Heart left ventricle (tissue), 16 donors: ENCODE measurements at regions of chr2 and their contacts with region 1.

Region 1: DNA sequence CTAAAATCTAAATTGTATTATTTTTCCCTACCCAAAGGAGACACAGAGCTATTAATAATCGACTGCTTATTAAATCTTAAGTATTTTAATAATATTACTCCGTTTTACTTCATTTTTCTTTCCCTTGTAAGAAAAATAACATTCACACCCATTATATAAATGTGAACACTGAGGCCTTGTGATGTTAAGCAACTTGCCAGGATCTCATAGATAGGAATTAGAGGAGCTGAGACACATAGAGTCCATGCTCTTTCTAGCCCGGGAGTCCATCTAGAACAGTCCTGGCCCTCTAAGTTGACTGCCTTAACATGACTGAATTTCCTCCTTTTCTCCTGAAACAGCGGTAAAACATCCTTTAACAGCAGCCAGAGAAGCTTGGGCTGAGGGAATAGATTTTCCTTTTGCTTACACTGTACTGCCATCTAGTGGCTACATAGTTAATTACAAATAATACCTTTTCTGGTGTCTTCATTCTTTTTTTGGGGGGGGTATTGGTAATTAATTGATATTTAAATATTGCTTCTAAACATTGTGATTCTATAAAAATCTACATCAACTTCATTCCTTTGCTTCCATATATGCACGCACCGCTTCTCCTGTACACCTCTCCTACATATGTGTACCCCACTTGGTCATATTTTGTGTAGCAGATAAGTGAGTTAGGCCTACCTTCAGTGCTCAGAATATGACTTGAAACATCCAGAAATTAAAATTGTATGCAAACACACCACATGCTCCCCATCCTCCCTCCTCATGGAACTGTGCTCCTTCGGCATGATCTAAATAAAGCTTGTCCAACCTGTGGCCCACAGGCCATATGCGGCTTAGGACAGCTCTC is 125.8 kb upstream of the HNMT start:
- DNase-seq: no peak
- ATAC-seq: no peak
- H3K4me3 ChIP-seq: no peak overlapping the region
- H3K27ac ChIP-seq: no peak overlapping the region
- H3K4me1 ChIP-seq: no peaks in the 10 kb centered on the region
- H3K27me3 ChIP-seq: peaks cover 0 to 3% (median 0%) of the 10 kb centered on the region in 9 donors
- CTCF ChIP-seq: peak; percentile 54 to 80 (median 68)
- POLR2A ChIP-seq: no peak

Region 2: DNA sequence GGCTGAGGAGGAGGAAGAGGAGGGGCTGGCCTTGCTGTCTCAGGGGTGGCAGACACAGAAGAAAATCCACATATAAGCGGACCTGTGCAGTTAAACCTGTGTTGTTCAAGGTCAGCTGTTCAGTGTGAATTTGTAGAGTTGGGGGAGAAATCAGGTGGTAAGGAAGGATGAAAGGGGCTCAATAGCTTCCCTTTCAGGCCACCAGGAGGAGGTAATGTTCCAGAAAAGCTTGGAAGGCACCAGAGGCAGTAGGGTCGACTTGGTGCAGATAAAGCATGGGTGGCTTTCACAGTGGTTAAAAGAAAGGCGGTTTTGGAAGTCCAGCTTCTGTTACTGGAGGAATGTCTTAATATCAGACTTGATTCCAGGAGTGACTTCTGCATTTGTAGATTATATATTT is 905.8 kb before region 1 on chr2:
- intact Hi-C with region 1: loop called in 4 of 10 experiments (anchors 5 kb)
- DNase-seq: no peak
- ATAC-seq: no peak
- H3K4me3 ChIP-seq: no peak overlapping the region
- H3K27ac ChIP-seq: no peak overlapping the region
- H3K4me1 ChIP-seq: no peaks in the 10 kb centered on the region
- H3K27me3 ChIP-seq: no peaks in the 10 kb centered on the region
- CTCF ChIP-seq: peak in 8 of 12 donors; percentile 15 to 31 (median 26)
- POLR2A ChIP-seq: no peak

Region 3: GRCh38 chr2:137467246-137467862 is 371.1 kb before region 1 on chr2:
- intact Hi-C with region 1: loop called in 7 of 10 experiments (anchors 2 to 10 kb)
- DNase-seq: peak in 1 of 5 donors; percentile 8
- ATAC-seq: no peak
- H3K4me3 ChIP-seq: no peak overlapping the region
- H3K27ac ChIP-seq: no peak overlapping the region
- H3K4me1 ChIP-seq: no peaks in the 10 kb centered on the region
- H3K27me3 ChIP-seq: no peaks in the 10 kb centered on the region
- CTCF ChIP-seq: peak; percentile 19 to 62 (median 44)
- POLR2A ChIP-seq: no peak

Region 4: DNA sequence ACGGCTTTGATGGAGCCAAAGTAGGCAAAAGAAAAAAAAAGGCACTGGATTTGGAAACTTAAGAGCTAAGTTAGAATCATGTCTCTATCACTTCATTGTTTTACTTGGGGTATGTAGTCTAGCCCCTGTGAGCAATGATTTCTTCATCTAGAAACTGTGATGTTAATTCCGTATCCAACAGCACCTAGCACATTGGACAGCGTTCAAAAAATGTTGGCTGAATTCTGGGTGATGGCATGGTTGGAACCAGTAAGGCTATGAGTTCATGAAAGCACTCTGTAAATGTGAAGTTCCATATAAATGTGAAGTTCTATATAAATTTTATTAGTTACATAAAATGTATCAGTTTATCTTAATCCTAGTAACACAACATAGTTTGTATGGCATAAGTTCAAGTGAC is 182.7 kb before region 1 on chr2:
- intact Hi-C with region 1: no loop called
- DNase-seq: no peak
- ATAC-seq: no peak
- H3K4me3 ChIP-seq: no peak overlapping the region
- H3K27ac ChIP-seq: no peak overlapping the region
- H3K4me1 ChIP-seq: no peaks in the 10 kb centered on the region
- H3K27me3 ChIP-seq: no peaks in the 10 kb centered on the region
- CTCF ChIP-seq: no peak
- POLR2A ChIP-seq: no peak

Region 5: DNA sequence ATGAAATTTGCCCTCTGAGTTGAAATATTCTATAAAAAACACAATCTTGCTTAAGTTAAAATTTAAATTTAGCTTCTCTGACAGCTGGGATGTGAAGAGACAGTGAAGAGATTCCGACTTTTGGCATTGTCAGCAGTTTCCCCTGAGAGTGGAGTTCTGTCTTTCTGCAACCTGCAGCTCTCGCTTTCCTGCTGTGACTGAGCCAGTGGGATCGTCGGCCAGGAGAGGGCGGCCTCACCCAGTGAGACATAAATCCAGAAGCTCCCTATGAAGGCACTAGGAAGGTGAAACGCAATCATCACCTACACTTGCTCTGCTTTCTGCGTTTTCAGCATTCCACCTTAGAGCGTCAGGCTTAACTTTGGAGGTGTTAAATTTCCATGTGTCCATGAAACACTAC is 50.4 kb after region 1 on chr2:
- intact Hi-C with region 1: no loop called
- DNase-seq: no peak
- ATAC-seq: no peak
- H3K4me3 ChIP-seq: no peak overlapping the region
- H3K27ac ChIP-seq: no peak overlapping the region
- H3K4me1 ChIP-seq: no peaks in the 10 kb centered on the region
- H3K27me3 ChIP-seq: peaks cover 0 to 7% (median 0%) of the 10 kb centered on the region in 9 donors
- CTCF ChIP-seq: peak in 8 of 12 donors; percentile 7 to 43 (median 34)
- POLR2A ChIP-seq: no peak

Region 6: DNA sequence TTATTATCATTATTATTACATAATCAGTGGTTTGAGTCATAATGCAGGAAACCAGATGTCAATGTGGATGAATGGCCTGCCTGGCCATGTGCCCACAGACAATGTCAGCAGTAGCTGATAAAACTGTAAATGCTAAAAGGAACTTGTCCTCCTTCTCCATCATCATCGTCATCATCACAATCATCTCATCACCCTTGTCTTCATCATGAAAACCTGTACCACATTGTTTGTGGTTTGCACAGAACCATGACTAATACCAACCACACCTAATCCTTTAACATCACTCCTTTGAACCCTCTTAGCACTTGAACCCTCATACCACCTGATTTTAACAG is 221.8 kb after region 1 on chr2:
- intact Hi-C with region 1: no loop called
- DNase-seq: peak; percentile 59 to 86 (median 75)
- ATAC-seq: peak in 3 of 4 donors; percentile 71 to 81 (median 77)
- H3K4me3 ChIP-seq: no peak overlapping the region
- H3K27ac ChIP-seq: peak overlapping the region in 5 of 12 donors; percentile 17 to 55 (median 44)
- H3K4me1 ChIP-seq: peaks cover 0 to 9% (median 0%) of the 10 kb centered on the region in 12 donors
- H3K27me3 ChIP-seq: no peaks in the 10 kb centered on the region
- CTCF ChIP-seq: no peak
- POLR2A ChIP-seq: no peak